ENCODE measurements at regions of chr2 and their contacts with region 1.

Region 1: DNA sequence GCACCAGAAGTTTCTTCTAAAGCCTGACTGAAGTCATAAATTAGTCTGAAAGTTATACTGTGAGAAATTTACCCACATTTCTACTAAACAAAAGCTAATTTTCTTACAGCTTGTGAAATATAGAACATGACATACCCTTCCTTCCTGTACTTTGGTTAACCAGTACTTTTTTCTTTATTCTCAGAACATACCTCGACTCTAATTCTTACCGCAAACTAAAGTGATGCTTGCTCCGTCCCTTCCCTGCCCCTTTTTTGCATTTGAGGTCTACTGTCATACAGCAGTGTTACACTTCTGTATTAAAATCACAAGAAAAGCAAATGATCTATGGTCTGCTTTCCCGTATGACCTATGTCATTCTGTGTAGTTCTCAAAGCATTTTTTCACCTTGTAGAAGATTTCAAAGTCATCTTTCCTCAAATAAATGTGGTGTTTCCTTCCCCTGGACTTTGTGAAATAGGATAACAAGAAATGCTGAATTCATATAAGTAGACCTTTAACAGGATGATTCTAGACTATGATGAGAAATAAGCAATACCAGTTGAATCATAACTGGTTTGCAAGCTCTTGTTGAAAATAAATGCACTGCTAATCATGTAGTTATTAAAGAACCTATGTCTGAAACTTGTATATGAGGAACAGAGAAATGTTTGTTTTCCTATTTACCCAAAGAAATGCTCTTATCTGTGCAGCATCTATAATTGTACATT is 30.4 kb downstream of the CYTIP start:
- DNase-seq: peak; percentile 60
- H3K4me3 Mint-ChIP-seq: peak overlapping the region; percentile 82
- H3K27ac Mint-ChIP-seq: peak overlapping the region; percentile 91
- H3K4me1 Mint-ChIP-seq: peaks cover 84% of the 10 kb centered on the region
- H3K27me3 Mint-ChIP-seq: no peaks in the 10 kb centered on the region

Region 2: DNA sequence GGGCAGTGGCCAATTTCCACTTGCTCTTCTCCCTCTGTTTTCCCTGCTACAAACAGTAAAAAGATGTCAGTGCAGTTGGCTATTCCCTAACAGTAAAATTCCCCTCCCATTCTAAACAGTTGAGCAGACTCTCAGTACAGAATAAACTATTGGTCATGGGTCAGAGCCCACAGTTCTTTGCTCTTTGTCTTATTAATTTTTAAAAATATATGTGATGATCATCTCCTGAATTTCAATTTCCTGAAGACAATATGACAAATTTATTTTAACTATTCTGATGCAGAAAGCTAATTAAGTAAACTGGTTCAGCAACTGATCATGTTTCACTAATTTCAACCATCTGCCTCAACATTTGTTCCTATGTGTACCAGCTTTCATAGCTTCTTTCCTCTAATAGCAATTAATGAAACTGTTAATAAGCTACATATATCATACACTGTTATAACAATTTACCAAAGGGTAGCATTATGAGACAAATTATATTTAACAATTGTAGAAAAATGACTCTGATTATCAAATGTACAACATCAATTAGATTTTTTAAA is 197.0 kb before region 1 on chr2:
- intact Hi-C with region 1: no loop called
- DNase-seq: no peak
- H3K4me3 Mint-ChIP-seq: no peak overlapping the region
- H3K27ac Mint-ChIP-seq: no peak overlapping the region
- H3K4me1 Mint-ChIP-seq: no peaks in the 10 kb centered on the region
- H3K27me3 Mint-ChIP-seq: peaks cover 8% of the 10 kb centered on the region

Region 3: DNA sequence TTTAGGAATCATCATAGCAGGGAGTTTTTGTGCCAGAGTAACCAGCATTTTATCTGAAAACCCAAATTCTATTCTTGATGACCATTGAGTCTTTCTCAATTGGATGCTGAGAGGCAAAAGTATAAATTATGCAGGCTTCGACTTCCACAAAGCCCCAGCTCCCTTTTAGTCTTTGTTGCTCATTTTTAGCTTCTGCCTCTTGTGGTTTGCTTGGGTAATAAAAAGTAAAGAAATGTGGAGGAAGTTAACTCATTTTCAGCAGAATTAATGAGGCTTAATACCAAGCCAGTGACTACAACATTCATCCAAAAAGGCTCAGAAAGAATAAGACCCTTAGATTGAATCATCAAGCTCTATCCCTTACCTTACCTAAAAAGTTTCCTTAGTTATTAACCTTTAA is 106.5 kb before region 1 on chr2:
- intact Hi-C with region 1: no loop called
- DNase-seq: no peak
- H3K4me3 Mint-ChIP-seq: no peak overlapping the region
- H3K27ac Mint-ChIP-seq: no peak overlapping the region
- H3K4me1 Mint-ChIP-seq: peaks cover 28% of the 10 kb centered on the region
- H3K27me3 Mint-ChIP-seq: peaks cover 1% of the 10 kb centered on the region

Region 4: DNA sequence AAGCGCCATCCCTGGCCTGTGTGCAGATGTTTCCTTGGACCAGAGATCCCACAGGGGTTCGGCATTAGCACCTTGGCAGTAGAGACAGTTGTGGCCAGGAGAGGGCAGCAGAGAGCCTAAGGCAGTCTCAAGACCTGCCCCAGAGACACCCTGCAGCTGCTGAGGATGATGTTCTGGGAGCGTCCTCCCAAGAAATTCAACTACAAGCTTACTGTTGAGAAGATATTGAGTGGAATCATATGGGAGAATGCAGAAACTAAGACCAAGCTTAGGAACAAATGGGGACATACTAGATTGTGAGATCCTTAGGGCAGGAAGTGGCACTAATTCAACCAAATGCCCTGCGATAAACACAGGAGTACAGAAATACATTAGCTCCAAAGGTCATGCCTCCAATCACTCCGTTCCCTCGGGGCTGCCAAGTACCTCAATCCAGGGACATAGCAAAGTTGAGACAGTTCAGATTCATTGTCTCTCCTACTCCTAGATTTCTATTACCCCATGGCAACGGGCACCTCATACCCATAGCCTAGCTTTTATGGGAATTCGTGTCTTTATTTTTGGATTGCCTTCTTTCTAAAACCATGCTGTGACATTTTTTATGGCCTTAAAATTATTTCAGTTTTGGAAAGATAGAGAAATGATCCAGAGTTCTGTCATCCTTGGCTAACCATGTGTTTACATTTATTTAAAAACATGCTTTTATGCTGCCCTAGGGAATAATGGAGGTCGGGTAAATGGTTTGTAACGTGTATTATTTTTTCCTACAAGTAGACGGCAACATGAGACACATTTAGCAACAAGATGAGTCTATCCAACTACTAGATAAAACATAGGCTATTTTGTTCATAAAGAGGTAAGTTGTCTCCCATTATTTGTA is 85.6 kb before region 1 on chr2:
- intact Hi-C with region 1: loop called (anchors 1 kb)
- DNase-seq: peak; percentile 74
- H3K4me3 Mint-ChIP-seq: peak overlapping the region; percentile 32
- H3K27ac Mint-ChIP-seq: peak overlapping the region; percentile 26
- H3K4me1 Mint-ChIP-seq: peaks cover 38% of the 10 kb centered on the region
- H3K27me3 Mint-ChIP-seq: no peaks in the 10 kb centered on the region

Region 5: DNA sequence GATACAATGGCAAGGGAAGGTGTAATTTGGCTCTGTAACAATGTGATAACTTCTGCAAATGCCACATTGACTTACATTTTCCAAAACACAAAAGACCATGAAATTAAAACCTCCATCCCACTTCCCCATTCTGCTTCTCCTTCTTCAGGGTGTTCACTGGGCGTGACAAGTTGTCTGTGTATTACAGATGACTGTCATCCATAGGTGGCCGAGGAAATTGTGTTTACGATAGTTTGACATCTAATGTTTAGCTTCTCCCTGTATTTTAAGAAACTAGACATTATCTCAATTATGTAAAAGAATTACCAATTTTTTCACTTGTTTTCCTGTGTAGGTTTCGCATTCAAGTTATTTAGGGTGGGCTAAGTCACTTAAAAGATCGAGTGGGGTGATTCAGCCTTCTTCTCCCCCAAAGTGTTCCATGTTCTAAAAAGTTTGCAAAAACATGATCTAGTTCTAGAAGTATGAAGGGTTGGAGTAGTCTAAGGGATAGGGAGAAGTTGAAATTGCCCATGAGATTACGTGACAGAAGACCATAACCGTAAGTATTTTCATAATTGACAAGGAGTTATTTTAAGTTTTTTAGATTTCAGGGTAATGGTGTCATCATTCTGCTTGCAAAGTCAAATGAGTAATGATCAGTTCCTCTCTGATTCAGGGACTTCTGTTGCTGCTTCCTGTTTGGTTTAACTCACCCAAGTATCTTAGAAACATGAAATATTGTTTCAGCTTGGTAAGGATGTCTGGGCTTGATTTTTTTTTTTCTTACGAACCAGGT is 55.6 kb after region 1 on chr2:
- intact Hi-C with region 1: loop called (anchors 1 kb)
- DNase-seq: no peak
- H3K4me3 Mint-ChIP-seq: peak overlapping the region; percentile 71
- H3K27ac Mint-ChIP-seq: peak overlapping the region; percentile 97
- H3K4me1 Mint-ChIP-seq: peaks cover 90% of the 10 kb centered on the region
- H3K27me3 Mint-ChIP-seq: no peaks in the 10 kb centered on the region

Region 6: DNA sequence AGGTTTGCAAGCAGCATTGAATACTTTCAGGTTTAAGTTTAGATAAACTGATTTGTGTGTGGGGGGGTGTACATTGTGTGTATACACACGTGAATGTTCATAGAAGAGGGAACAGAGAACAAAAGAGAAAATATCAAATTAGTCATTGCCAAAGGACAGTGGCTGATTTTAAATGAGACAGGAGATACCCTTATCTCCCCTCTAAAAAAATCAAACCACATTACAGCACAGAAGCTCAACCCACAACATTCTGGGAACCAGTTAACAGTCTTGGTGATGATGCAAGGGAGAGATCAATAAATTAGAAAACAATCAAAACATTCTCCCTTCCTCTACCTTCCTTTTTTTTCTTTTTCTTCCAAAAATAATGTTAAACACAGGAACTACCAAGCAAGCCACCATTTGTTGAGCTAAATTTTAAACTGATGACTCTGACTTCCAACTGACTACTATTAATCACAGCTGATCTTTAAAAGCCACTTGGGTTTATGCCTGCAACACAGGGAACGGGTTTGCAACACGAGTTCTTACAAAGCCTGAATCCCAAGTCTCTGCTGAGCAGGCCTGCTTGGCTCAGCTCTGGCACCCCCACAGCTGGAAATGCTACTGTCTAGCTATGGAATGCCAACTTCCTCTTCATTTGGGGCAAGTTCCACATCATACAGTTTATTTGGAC is 334.4 kb after region 1 on chr2:
- intact Hi-C with region 1: loop called (anchors 10 kb)
- DNase-seq: no peak
- H3K4me3 Mint-ChIP-seq: no peak overlapping the region
- H3K27ac Mint-ChIP-seq: peak overlapping the region; percentile 50
- H3K4me1 Mint-ChIP-seq: peaks cover 65% of the 10 kb centered on the region
- H3K27me3 Mint-ChIP-seq: no peaks in the 10 kb centered on the region